PC-3 (cell line): ENCODE measurements at regions of chr11 and their contacts with region 1.

Region 1: GRCh38 chr11:70016666-70017367 is 61.3 kb upstream of the ANO1 start:
- DNase-seq: peak; percentile 100
- ATAC-seq: peak; percentile 97
- H3K4me3 ChIP-seq: no peak overlapping the region
- H3K27ac ChIP-seq: peak overlapping the region; percentile 95
- H3K4me1 ChIP-seq: peaks cover 30% of the 10 kb centered on the region
- H3K27me3 ChIP-seq: no peaks in the 10 kb centered on the region
- CTCF ChIP-seq: no peak

Region 2: DNA sequence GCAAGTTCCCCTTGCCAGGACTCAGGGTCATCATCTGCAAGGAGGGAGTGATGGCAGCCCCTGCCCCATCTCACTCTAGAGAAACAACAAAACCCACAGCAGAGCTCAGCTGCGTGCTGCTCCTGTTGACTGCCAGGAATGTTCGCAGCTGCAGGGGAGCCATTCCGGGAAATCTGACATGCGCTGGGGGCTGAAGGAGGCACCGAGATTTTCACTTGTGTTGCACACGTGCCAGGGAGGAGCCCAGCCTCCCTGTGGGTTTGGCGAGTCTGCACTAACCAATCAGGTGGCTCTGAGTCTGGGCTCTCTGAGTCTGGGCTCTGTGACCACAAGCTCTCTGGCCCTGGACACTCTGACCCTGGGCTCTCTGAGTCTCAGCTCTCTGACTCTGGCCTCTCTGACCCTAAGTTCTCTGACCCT is 208.1 kb before region 1 on chr11:
- CTCF ChIA-PET with region 1: no interaction called
- POLR2A ChIA-PET with region 1: no interaction called
- intact Hi-C with region 1: no loop called
- DNase-seq: no peak
- ATAC-seq: no peak
- H3K4me3 ChIP-seq: no peak overlapping the region
- H3K27ac ChIP-seq: no peak overlapping the region
- H3K4me1 ChIP-seq: no peaks in the 10 kb centered on the region
- H3K27me3 ChIP-seq: no peaks in the 10 kb centered on the region
- CTCF ChIP-seq: no peak

Region 3: GRCh38 chr11:69949327-69949726 is 67.5 kb before region 1 on chr11:
- CTCF ChIA-PET with region 1: interaction called, 3 read pairs
- POLR2A ChIA-PET with region 1: no interaction called
- intact Hi-C with region 1: loop called (anchors 1 kb)
- DNase-seq: peak; percentile 99
- ATAC-seq: peak; percentile 81
- H3K4me3 ChIP-seq: no peak overlapping the region
- H3K27ac ChIP-seq: peak overlapping the region; percentile 97
- H3K4me1 ChIP-seq: peaks cover 45% of the 10 kb centered on the region
- H3K27me3 ChIP-seq: no peaks in the 10 kb centered on the region
- CTCF ChIP-seq: no peak

Region 4: GRCh38 chr11:70158201-70158600 is 141.4 kb after region 1 on chr11:
- CTCF ChIA-PET with region 1: no interaction called
- POLR2A ChIA-PET with region 1: no interaction called
- intact Hi-C with region 1: loop called (anchors 1 kb)
- DNase-seq: peak; percentile 30
- ATAC-seq: no peak; the same call in 1 of the 2 replicates
- H3K4me3 ChIP-seq: no peak overlapping the region
- H3K27ac ChIP-seq: peak overlapping the region; percentile 97
- H3K4me1 ChIP-seq: peaks cover 30% of the 10 kb centered on the region
- H3K27me3 ChIP-seq: no peaks in the 10 kb centered on the region
- CTCF ChIP-seq: peak; percentile 60

Region 5: GRCh38 chr11:70270104-70270876 is 253.5 kb after region 1 on chr11 and contains the start of gene PPFIA1:
- CTCF ChIA-PET with region 1: no interaction called
- POLR2A ChIA-PET with region 1: no interaction called
- intact Hi-C with region 1: no loop called
- DNase-seq: peak; percentile 99
- ATAC-seq: peak; percentile 92
- H3K4me3 ChIP-seq: peak within 1 kb of the TSS; percentile 92
- H3K27ac ChIP-seq: peak within 1 kb of the TSS; percentile 42
- H3K4me1 ChIP-seq: peaks cover 23% of the 10 kb centered on the region
- H3K27me3 ChIP-seq: no peaks in the 10 kb centered on the region
- CTCF ChIP-seq: 0 out of 2 replicates have a peak, but pooled peaks have one; percentile 18
- total RNA-seq, gene PPFIA1: 57.5 and 71.1 TPM in 2 replicates